ENCODE measurements at regions of chr22 and their contacts with region 1.

Region 1: DNA sequence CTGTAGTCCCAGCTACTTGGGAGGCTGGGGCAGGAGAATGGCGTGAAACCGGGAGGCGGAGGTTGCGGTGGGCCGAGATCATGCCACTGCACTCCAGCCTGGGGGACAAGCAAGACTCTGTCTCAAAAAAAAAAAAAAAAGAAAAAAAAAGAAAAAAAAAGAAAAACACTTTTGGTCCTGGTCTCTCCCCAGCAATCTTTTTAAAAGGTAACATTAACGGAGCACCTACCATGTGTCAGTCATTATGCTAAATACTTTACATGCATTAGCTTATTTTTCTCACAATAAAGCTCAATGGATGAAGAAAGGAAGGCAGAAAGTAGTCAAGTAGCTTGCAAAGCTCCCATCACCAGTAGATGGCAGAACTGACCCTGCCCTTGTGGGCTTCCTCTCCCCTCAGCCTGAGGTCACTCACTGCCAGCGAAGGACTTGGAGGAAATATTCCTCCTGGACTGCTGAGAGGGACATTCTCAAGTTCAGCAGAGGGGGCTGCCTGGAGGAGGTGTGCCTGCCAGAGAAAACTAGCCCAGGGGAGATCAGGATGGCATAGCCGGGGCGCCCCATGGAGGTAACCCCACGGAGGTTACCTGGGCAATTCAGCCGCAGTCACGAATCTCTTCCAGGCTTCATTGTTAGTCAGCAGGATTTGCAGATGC is 15.5 kb downstream of the APOL3 start:
- DNase-seq: no peak
- H3K4me3 ChIP-seq: no peak overlapping the region
- H3K27ac ChIP-seq: no peak overlapping the region
- H3K4me1 ChIP-seq: no peaks in the 10 kb centered on the region
- H3K27me3 ChIP-seq: no peaks in the 10 kb centered on the region
- CTCF ChIP-seq: peak in 3 of 4 experiments; percentile 66 to 86 (median 84)
- POLR2A ChIP-seq: no peak

Region 2: DNA sequence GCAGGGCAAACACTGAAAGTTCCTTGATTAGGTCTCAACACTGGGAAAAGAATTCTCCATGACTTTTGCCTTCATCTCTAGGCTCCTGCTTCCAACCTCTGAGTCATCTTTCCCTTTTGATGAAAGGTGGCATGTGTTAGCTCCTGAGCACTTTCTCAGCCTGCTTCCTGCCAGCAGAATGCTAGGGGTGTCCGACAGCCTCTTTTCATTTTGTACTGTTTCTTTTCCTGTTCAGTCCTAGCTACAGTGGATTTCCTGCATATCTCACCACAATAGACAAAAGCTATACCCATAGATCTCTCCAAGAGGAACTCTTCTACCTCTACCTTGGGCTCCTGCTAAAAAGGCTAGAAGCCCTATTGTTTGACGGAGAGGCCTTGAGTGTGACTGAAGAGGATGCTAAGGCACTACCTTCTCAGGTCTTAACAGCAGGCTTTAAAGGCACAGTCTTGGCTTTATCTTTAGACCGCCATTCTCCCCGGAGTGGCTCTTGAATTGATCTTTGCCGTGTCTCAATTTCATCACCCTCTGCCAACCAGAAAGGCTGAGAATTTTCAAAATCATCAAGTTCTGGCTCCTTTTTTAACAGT is 261.9 kb before region 1 on chr22:
- intact Hi-C with region 1: no loop called
- DNase-seq: no peak
- H3K4me3 ChIP-seq: no peak overlapping the region
- H3K27ac ChIP-seq: no peak overlapping the region
- H3K4me1 ChIP-seq: no peaks in the 10 kb centered on the region
- H3K27me3 ChIP-seq: no peaks in the 10 kb centered on the region
- CTCF ChIP-seq: no peak
- POLR2A ChIP-seq: no peak

Region 3: GRCh38 chr22:35914665-35915476 is 230.1 kb before region 1 on chr22:
- intact Hi-C with region 1: no loop called
- DNase-seq: peak; percentile 86
- H3K4me3 ChIP-seq: peak overlapping the region; percentile 23 to 32
- H3K27ac ChIP-seq: peak overlapping the region; percentile 79 to 82
- H3K4me1 ChIP-seq: peaks cover 17% of the 10 kb centered on the region
- H3K27me3 ChIP-seq: no peaks in the 10 kb centered on the region
- CTCF ChIP-seq: no peak
- POLR2A ChIP-seq: no peak

Region 4: GRCh38 chr22:36180038-36180880 is 35.2 kb after region 1 on chr22:
- intact Hi-C with region 1: loop called (anchors 2 kb)
- DNase-seq: peak; percentile 78
- H3K4me3 ChIP-seq: no peak overlapping the region
- H3K27ac ChIP-seq: no peak overlapping the region
- H3K4me1 ChIP-seq: no peaks in the 10 kb centered on the region
- H3K27me3 ChIP-seq: no peaks in the 10 kb centered on the region
- CTCF ChIP-seq: peak; percentile 78 to 87 (median 84)
- POLR2A ChIP-seq: no peak

Region 5: GRCh38 chr22:36481393-36482168 is 336.6 kb after region 1 on chr22 and contains the start of gene TXN2:
- intact Hi-C with region 1: no loop called
- DNase-seq: peak; percentile 93
- H3K4me3 ChIP-seq: peak within 1 kb of the TSS; percentile 75
- H3K27ac ChIP-seq: peak within 1 kb of the TSS; percentile 98 to 100
- H3K4me1 ChIP-seq: peaks cover 10% of the 10 kb centered on the region
- H3K27me3 ChIP-seq: no peaks in the 10 kb centered on the region
- CTCF ChIP-seq: no peak
- POLR2A ChIP-seq: peak; percentile 87
- total RNA-seq, gene TXN2: 74.3 to 148 TPM

Measured in prostate gland (tissue), 2 donors.